ENCODE measurements at regions of chr2 and their contacts with region 1.

Region 1: DNA sequence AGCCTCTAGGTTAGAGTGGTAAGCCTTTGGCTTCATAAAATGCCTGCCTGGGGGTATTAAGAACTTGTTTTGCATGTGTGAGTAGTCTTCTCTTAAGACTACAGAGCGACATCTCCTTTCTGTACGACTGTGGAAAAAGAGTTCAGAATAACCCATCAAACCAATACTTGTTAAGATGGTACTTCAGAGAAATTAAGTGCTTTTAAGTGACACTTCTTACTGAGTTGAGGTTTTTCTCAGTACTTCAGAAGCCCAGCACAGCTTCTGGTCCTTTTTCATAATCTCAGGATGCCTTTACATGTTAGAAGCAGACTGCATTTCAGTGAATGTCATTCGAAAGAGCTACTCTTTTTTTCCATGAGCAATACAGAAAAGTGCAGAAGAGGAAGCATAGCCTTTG is 10.8 kb downstream of the XRCC5 start:
- DNase-seq: peak; percentile 31
- H3K4me3 Mint-ChIP-seq: peak overlapping the region; percentile 33
- H3K27ac Mint-ChIP-seq: peak overlapping the region; percentile 95
- H3K4me1 Mint-ChIP-seq: peaks cover 79% of the 10 kb centered on the region
- H3K27me3 Mint-ChIP-seq: no peaks in the 10 kb centered on the region

Region 2: GRCh38 chr2:216133397-216133796 is 13.4 kb after region 1 on chr2:
- CTCF ChIA-PET with region 1: interaction called, 6 read pairs
- intact Hi-C with region 1: loop called (anchors 1 kb)
- DNase-seq: no peak
- H3K4me3 Mint-ChIP-seq: no peak overlapping the region
- H3K27ac Mint-ChIP-seq: peak overlapping the region; percentile 80
- H3K4me1 Mint-ChIP-seq: peaks cover 61% of the 10 kb centered on the region
- H3K27me3 Mint-ChIP-seq: no peaks in the 10 kb centered on the region

Region 3: GRCh38 chr2:217742841-217743240 is 1622.9 kb after region 1 on chr2:
- CTCF ChIA-PET with region 1: no interaction called
- intact Hi-C with region 1: no loop called
- DNase-seq: no peak
- H3K4me3 Mint-ChIP-seq: no peak overlapping the region
- H3K27ac Mint-ChIP-seq: no peak overlapping the region
- H3K4me1 Mint-ChIP-seq: no peaks in the 10 kb centered on the region
- H3K27me3 Mint-ChIP-seq: no peaks in the 10 kb centered on the region